ENCODE measurements at regions of chr20 and their contacts with region 1.

Region 1: GRCh38 chr20:53578492-53579222 is 15.0 kb downstream of the ZNF217 start:
- DNase-seq: peak; percentile 47
- H3K4me3 Mint-ChIP-seq: peak overlapping the region; percentile 75
- H3K27ac Mint-ChIP-seq: peak overlapping the region; percentile 86
- H3K4me1 Mint-ChIP-seq: peaks cover 78% of the 10 kb centered on the region
- H3K27me3 Mint-ChIP-seq: no peaks in the 10 kb centered on the region

Region 2: DNA sequence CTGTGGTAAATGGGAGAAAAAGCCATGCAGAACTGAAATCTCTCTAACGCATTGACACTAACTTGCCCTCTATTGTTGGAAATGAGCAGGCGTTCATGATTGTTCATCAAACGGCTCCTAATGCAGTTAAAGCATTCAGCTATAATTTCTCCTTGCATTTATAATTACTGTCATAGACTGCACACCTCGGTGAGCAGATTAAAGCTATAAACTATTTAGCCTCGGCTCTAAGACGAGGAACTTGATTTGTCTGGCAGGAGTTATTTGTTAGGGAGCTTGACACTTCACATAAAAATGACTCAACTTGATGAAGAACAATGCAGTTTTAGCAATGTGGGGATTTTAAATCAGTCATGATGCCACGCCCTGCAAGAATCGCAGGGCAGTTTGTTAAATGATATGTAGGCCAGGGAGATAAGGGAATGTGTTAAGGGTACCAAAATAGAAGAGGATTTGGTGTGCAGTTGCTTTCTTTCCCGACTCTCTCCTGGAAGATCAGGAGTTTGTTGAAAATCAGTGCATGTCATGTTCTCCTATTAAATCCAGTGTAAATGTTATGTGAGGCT is 316.3 kb before region 1 on chr20:
- intact Hi-C with region 1: no loop called
- DNase-seq: no peak
- H3K4me3 Mint-ChIP-seq: no peak overlapping the region
- H3K27ac Mint-ChIP-seq: no peak overlapping the region
- H3K4me1 Mint-ChIP-seq: no peaks in the 10 kb centered on the region
- H3K27me3 Mint-ChIP-seq: no peaks in the 10 kb centered on the region

Region 3: GRCh38 chr20:53611449-53611894 is 32.8 kb after region 1 on chr20:
- intact Hi-C with region 1: no loop called
- DNase-seq: no peak
- H3K4me3 Mint-ChIP-seq: no peak overlapping the region
- H3K27ac Mint-ChIP-seq: no peak overlapping the region
- H3K4me1 Mint-ChIP-seq: peaks cover 28% of the 10 kb centered on the region
- H3K27me3 Mint-ChIP-seq: no peaks in the 10 kb centered on the region

Region 4: DNA sequence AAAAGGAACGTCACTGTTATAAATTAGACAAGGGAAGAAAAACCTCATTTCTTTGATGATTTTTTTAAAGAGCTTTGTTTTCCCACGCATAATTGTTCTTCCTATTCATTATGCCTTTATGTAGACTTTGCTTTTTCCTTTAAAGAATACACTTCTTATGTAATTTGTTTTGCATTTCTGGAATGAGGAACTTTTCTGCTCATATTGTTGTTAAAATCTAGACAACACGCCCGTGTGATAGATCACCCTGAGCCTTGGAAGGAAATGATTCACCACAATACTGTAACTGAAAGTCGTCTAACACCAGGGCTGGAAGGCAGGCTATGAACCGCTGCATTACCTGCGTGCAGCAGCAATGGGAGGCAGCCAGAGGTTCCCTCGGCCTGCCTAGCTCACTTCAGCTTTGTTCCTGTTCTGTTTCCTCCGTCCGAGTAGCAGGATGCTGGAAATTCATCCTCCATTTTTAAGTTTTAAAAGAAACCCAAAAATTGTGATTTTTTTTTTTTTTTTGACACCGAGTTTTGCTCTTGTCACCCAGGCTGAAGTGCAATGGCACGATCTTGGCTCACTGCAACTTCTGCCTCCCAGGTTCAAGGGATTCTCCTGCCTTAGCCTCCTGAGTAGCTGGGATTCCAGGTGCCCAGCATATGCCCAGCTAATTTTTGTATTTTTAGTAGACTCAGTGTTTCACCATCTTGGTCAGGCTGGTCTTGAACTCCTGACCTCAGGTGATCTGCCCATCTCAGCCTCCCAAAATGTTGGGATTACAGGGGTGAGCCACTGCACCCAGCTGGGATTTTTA is 64.6 kb after region 1 on chr20:
- intact Hi-C with region 1: loop called (anchors 2 kb)
- DNase-seq: peak; percentile 67
- H3K4me3 Mint-ChIP-seq: peak overlapping the region; percentile 76
- H3K27ac Mint-ChIP-seq: peak overlapping the region; percentile 95
- H3K4me1 Mint-ChIP-seq: peaks cover 33% of the 10 kb centered on the region
- H3K27me3 Mint-ChIP-seq: no peaks in the 10 kb centered on the region

Region 5: DNA sequence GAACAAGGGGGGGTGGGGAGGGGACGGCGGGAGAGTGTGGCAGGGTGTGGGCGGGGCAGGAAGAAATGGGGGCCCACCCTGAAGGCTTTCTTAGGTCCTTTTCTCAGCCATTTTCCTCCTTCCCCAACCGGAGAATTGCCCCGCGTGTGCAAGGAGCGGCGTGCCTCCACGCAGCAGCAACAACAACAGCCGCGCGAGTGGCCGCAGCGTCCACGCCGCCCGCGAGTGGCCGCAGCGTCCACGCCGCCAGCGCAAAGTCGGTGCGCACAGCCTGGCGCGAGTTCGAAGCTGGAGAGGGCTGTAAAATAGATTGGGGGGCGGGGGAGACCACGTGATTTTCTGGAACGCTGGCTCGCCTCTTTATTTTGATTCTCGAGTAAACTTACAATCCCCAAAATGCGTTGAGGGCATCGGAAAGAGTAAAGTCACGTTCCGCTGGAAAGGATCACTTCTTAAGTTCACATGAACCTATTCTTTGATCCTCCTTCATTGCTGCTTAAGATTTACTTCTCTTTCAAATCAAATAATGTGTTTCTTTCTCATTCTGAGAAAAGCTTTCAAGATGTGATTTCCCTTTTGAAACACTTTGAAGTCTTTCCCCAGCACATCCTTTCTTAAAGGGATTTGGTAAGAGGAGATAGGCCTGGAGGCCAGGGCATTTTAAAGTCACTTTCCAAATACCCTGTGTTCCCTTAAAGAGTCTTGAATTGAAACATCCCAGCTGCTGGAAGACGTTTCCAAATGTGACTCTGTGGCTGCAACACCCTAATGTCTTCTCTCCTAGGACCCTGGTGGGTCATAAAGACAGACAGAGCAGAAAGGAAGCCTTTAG is 81.6 kb after region 1 on chr20:
- intact Hi-C with region 1: no loop called
- DNase-seq: no peak
- H3K4me3 Mint-ChIP-seq: peak overlapping the region; percentile 77
- H3K27ac Mint-ChIP-seq: peak overlapping the region; percentile 84
- H3K4me1 Mint-ChIP-seq: peaks cover 55% of the 10 kb centered on the region
- H3K27me3 Mint-ChIP-seq: no peaks in the 10 kb centered on the region

Region 6: DNA sequence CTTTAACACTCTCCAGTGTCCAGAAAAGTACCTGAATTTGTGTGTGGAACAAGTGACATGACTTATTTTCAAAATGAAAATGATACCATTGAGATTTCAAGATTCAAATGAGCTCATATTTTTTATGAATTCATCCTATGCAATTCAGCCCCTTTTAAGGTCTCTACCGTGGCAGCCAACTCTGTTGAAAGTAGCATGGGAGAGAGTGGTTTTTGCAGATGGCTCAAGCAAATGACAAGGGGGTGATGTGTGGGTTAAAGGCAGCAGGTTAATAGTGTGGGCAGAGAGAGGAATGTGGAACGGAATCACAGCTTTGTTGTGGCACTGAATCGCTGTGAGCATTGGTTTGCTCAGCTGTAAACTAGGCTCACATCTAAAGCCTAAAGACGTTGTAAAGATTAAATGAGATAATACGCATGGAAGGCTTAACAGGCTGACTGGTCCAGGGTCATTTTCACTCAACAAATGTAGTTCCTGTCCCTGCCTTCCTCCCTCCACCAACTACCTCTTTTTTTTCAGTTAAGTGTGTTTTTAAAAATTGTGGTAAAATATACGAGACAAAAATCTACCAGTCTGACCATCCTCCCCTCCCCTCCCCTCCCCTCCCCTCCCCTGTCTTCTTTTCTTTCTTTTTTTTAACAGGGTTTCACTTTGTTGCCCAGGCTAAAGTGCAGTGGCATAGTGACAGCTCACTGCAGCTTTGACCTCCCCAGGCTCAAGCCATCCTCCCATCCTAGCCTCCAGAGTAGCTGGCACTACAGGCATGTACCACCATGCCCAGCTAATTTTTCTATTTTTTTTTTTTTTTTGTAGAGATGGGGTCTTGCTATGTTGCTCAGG is 129.7 kb after region 1 on chr20:
- intact Hi-C with region 1: loop called (anchors 1 kb)
- DNase-seq: peak; percentile 42
- H3K4me3 Mint-ChIP-seq: peak overlapping the region; percentile 64
- H3K27ac Mint-ChIP-seq: peak overlapping the region; percentile 97
- H3K4me1 Mint-ChIP-seq: peaks cover 45% of the 10 kb centered on the region
- H3K27me3 Mint-ChIP-seq: no peaks in the 10 kb centered on the region

Region 7: DNA sequence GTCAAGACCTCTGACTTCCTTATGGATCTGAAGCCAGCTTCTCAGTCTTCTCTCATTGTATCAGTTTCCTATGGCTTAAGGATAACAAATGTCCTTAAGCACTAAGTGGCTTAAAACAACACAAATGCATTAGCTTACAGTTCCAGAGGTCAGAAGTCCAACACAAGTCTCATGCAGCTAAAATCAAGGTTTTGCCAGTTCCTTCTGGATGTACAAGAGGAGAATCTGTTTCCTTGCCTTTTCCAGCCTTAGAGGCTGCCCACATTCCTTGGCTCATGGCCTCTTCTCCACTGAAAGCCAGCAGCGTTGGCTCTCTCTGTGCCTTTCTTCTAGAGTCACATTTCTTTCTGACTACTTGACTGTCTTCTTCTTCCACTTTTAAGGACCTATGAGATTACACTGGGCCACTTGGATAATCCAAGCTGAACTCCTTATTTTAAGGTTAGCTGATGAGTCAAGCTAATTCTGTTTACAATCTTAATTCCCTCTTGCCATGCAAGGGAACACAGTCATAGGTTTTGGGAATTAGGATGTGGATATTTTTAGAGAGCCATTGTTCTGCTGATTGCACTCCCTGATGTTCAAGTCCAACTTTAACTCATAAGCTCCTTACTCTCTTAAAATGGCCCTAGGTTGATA is 312.8 kb after region 1 on chr20:
- intact Hi-C with region 1: loop called (anchors 1 kb)
- DNase-seq: no peak
- H3K4me3 Mint-ChIP-seq: no peak overlapping the region
- H3K27ac Mint-ChIP-seq: no peak overlapping the region
- H3K4me1 Mint-ChIP-seq: peaks cover 45% of the 10 kb centered on the region
- H3K27me3 Mint-ChIP-seq: no peaks in the 10 kb centered on the region

Region 8: DNA sequence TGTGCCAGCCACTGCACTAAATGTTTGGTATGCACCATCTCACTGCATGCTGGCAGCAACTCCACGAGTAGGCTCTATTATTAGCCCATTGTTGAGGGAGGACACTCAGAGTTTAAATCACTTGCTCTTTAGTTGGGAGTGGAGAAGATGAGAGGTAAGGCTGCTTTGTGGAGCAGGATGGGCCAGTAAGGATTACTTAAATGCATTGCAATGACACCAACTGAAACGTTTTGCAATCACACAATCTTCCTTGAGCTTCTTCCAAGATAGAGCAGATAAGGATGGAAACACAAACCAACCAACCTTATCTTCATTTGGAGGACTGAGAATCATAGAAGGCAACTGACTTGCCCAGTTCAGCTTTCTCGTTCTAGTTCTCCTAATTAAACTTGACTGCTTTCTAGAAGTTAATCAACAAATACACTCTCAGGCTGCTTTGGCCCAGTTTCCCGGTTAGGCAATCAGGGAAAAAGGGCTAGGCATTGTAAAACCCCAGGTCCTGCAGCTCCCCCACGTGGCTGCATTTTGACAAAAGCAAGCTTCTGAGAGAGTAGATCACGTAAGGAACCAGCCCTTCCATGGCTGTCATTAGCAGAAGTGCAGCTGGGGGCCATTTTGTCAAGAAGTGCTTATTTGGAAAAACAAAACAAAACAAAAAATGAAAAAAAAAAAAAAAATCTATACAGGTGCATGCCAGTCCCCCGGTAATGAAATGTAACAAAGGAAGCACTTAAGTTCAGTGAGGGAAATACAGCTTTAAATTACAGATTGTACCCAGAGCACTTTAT is 361.1 kb after region 1 on chr20:
- intact Hi-C with region 1: loop called (anchors 1 kb)
- DNase-seq: peak; percentile 63
- H3K4me3 Mint-ChIP-seq: no peak overlapping the region
- H3K27ac Mint-ChIP-seq: no peak overlapping the region
- H3K4me1 Mint-ChIP-seq: peaks cover 43% of the 10 kb centered on the region
- H3K27me3 Mint-ChIP-seq: no peaks in the 10 kb centered on the region

Region 9: GRCh38 chr20:54062812-54063280 is 484.2 kb after region 1 on chr20:
- intact Hi-C with region 1: loop called (anchors 5 kb)
- DNase-seq: no peak
- H3K4me3 Mint-ChIP-seq: no peak overlapping the region
- H3K27ac Mint-ChIP-seq: no peak overlapping the region
- H3K4me1 Mint-ChIP-seq: peaks cover 11% of the 10 kb centered on the region
- H3K27me3 Mint-ChIP-seq: no peaks in the 10 kb centered on the region